Caco-2 (cell line): ENCODE measurements at regions of chr10 and their contacts with region 1.

Region 1: DNA sequence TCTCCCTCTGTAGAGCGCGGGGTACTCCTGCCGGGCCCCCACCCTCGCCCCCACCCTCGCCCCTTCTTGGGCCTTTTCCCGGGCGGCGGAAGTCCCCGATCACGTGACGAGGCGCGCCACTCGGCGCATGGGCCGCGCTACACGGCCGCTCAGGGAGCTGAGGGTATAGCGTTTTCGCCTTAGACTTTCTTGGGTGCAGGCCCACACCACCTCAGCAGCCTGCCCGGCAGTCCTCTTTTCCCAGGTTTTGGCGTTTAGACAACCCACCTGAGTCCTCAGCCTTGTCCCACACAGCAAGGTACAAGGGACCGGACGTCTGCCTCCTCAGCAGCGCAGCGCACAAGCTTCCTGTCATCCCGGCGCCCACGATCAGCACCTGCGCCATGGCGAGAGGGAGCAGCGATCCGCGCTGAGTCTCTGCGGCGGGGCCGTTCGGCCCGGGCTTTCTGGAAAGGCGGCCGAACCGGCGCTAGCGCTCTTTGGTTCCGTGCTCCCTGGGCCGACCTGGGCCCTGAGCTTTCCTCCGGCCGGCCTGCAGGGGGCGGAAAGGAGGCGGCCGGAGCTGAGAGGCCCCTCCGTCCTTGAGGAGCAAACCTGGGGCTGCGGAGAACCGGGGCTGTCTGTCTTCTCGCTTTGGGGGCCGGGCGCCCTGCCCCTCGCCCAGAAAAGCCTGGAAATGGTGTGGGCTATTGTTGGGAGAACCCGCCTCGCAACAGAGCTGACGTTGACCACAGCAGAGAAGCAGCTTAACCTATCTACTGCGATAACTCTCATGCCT is at the start of gene RNLS:
- DNase-seq: peak; percentile 72 to 76
- H3K4me3 ChIP-seq: peak within 1 kb of the TSS; percentile 74
- H3K4me3 Mint-ChIP-seq: peak within 1 kb of the TSS; percentile 88
- H3K27ac Mint-ChIP-seq: peak within 1 kb of the TSS; percentile 85
- H3K4me1 ChIP-seq: no peaks in the 10 kb centered on the region
- H3K4me1 Mint-ChIP-seq: peaks cover 7% of the 10 kb centered on the region
- H3K27me3 ChIP-seq: no peaks in the 10 kb centered on the region
- H3K27me3 Mint-ChIP-seq: peaks cover 9% of the 10 kb centered on the region
- CTCF ChIP-seq: peak; percentile 68 to 86
- total RNA-seq, gene RNLS: 5.7 and 6.7 TPM in 2 replicates

Region 2: DNA sequence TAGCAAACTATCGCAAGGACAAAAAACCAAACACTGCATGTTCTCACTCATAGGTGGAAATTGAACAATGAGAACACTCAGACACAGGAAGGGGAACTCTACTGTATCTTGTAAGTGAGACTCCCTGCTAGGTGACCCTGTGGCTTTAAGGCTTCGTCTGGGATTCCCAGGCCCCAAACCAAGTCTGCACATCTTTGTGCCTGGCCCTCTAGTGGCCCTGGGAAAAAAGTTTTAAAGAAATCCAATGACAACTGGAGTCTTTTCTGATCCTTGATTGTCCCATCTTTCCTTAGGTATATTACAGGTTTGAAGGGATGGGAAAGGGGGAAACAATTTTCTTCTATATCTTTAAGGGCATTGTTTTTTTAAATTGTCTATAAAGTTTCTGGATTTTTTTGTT is 208.9 kb after region 1 on chr10:
- CTCF ChIA-PET with region 1: interaction called, 3 read pairs
- POLR2A ChIA-PET with region 1: no interaction called
- intact Hi-C with region 1: loop called (anchors 5 kb)
- DNase-seq: peak; percentile 49 to 52
- H3K4me3 ChIP-seq: no peak overlapping the region
- H3K4me3 Mint-ChIP-seq: no peak overlapping the region
- H3K27ac Mint-ChIP-seq: no peak overlapping the region
- H3K4me1 ChIP-seq: no peaks in the 10 kb centered on the region
- H3K4me1 Mint-ChIP-seq: no peaks in the 10 kb centered on the region
- H3K27me3 ChIP-seq: no peaks in the 10 kb centered on the region
- H3K27me3 Mint-ChIP-seq: peaks cover 7% of the 10 kb centered on the region
- CTCF ChIP-seq: peak; percentile 66 to 73

Region 3: DNA sequence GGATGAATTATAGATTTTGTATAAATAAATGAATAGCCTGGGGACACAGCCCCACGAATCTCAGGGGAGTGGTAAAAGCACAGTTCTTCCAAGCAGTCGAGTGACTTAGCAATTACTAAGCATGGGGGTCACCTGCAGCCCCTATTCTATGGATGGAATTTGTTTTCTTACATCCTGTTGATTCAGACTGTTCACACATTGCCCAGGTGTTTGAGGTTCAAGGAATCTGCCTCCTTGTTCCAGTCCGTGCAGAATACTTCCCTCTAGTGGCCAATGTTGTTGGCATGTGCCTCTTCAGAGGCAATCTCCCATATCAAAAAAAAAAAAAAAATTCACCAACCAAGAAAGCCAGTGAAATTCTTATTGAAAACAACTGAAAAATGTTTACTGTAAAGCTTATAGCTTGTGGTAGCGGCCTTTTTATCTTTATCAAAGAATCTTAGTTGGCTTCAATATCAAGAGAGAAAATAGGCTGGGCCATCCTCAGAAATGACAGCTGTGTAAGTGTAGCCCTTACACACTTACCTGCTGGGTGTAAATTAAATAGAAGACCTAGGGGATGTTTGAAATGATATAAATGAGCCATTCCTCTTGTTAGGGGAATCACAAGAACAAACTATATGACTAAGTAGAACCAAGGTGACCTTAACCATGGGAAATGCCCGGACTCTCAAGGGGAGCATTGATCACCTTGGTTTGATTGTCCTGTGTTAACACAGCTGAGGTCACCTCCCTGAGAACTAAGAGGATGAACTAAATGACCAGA is 227.4 kb after region 1 on chr10:
- CTCF ChIA-PET with region 1: no interaction called
- POLR2A ChIA-PET with region 1: no interaction called
- intact Hi-C with region 1: loop called (anchors 5 kb)
- DNase-seq: peak; percentile 37 to 56
- H3K4me3 ChIP-seq: no peak overlapping the region
- H3K4me3 Mint-ChIP-seq: no peak overlapping the region
- H3K27ac Mint-ChIP-seq: no peak overlapping the region
- H3K4me1 ChIP-seq: no peaks in the 10 kb centered on the region
- H3K4me1 Mint-ChIP-seq: no peaks in the 10 kb centered on the region
- H3K27me3 ChIP-seq: peaks cover 2% of the 10 kb centered on the region; the same call in 1 of the 2 replicates
- H3K27me3 Mint-ChIP-seq: peaks cover 5% of the 10 kb centered on the region
- CTCF ChIP-seq: peak; percentile 65 to 76